ENCODE measurements at regions of chr3 and their contacts with region 1.

Region 1: GRCh38 chr3:94004301-94004910 is 24.0 kb downstream of the STX19 start:
- DNase-seq: no peak
- H3K4me3 Mint-ChIP-seq: peak overlapping the region; percentile 73
- H3K27ac Mint-ChIP-seq: peak overlapping the region; percentile 68
- H3K4me1 Mint-ChIP-seq: peaks cover 34% of the 10 kb centered on the region
- H3K27me3 Mint-ChIP-seq: no peaks in the 10 kb centered on the region

Region 2: DNA sequence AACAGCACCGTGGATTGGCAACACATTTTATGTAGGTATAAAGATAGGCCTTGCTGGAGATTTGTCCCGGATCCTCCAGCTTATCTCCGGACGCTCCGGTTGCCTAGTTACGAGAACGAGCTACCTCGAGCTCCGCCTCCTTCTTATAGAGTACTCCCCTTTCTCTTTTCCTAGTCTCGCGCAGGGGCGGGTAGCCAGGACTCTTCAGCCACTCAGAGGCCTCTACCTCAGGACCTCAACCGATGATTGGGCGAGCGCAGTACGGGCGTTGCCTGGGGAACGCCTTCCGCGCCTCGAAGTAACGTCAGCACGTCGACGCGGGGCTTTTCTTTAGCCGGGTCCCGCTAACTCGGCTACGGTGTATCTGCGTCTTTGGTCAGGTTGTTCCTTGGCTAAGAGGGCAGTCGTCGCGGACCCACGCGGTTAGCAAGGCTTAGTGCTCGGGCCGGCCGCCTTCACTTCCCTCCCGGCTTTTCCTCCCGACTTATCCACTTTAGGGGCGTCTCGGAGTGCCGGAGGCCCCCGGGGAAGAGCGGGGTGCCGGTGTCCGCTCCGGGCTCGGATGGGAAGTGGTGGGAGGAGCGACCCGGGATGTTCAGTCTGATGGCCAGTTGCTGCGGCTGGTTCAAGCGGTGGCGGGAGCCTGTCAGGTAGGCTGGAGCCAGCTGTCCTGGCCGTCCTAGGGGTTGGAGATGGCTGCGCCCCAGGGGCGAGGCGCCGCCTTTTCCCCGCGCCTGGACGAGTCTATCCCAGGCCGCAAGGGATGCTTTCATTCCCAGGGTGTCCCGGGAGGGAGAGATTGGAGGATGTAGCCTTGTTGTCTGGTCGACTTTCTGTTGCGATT is 24.4 kb before region 1 on chr3 and contains the start of gene ARL13B:
- intact Hi-C with region 1: loop called (anchors 1 kb)
- DNase-seq: peak; percentile 93
- H3K4me3 Mint-ChIP-seq: peak within 1 kb of the TSS; percentile 87
- H3K27ac Mint-ChIP-seq: peak within 1 kb of the TSS; percentile 65
- H3K4me1 Mint-ChIP-seq: peaks cover 16% of the 10 kb centered on the region
- H3K27me3 Mint-ChIP-seq: peaks cover 4% of the 10 kb centered on the region
- total RNA-seq, gene ARL13B: 13.4 and 17.4 TPM in 2 replicates

Region 3: GRCh38 chr3:94069194-94069813 is 64.9 kb after region 1 on chr3:
- intact Hi-C with region 1: loop called (anchors 1 kb)
- DNase-seq: no peak
- H3K4me3 Mint-ChIP-seq: no peak overlapping the region
- H3K27ac Mint-ChIP-seq: no peak overlapping the region
- H3K4me1 Mint-ChIP-seq: peaks cover 64% of the 10 kb centered on the region
- H3K27me3 Mint-ChIP-seq: no peaks in the 10 kb centered on the region

Region 4: GRCh38 chr3:94249585-94249984 is 245.2 kb after region 1 on chr3:
- intact Hi-C with region 1: loop called (anchors 5 kb)
- DNase-seq: peak; percentile 33
- H3K4me3 Mint-ChIP-seq: no peak overlapping the region
- H3K27ac Mint-ChIP-seq: no peak overlapping the region
- H3K4me1 Mint-ChIP-seq: no peaks in the 10 kb centered on the region
- H3K27me3 Mint-ChIP-seq: peaks cover 2% of the 10 kb centered on the region

Measured in activated T-helper 2 cell treated with anti-CD3 and anti-CD28 coated beads, Interferon-gamma antibody, Interleukin-2, Interleukin-4, amounts not matched to agents 10 μg/mL and 5 μg/mL and 100 μg/mL, durations not matched to agents 14 hours and 24 hours and 36 hours (primary cell).